ENCODE measurements at regions of chr17 and their contacts with region 1.

Region 1: DNA sequence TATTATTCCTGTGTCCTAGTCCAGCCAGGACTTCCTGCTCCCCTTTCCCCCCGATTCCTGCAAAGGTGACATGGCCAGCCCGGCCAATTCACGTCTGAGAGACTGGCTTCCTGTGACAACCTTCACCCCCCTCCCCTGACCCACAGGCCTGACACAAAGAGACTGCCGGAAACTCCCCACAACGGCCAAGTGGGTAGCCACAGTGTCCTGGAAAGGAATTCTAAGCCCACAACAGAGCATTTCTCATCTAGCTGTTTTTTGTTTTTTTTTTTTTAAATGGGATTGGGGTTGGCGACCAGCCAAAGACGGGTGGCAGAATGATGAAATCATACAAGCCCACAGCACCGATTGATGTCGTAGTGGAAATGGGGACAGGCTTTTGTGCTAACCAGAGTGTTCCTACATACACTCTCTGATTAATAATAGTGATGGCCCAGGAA is 2.8 kb upstream of the XAF1 start:
- DNase-seq: peak; percentile 87
- H3K4me3 ChIP-seq: peak overlapping the region in 1 of 3 experiments; percentile 13
- H3K27ac ChIP-seq: peak overlapping the region; percentile 96
- H3K4me1 ChIP-seq: peaks cover 36% of the 10 kb centered on the region
- H3K27me3 ChIP-seq: no peaks in the 10 kb centered on the region
- CTCF ChIP-seq: no peak
- POLR2A ChIP-seq: no peak

Region 2: DNA sequence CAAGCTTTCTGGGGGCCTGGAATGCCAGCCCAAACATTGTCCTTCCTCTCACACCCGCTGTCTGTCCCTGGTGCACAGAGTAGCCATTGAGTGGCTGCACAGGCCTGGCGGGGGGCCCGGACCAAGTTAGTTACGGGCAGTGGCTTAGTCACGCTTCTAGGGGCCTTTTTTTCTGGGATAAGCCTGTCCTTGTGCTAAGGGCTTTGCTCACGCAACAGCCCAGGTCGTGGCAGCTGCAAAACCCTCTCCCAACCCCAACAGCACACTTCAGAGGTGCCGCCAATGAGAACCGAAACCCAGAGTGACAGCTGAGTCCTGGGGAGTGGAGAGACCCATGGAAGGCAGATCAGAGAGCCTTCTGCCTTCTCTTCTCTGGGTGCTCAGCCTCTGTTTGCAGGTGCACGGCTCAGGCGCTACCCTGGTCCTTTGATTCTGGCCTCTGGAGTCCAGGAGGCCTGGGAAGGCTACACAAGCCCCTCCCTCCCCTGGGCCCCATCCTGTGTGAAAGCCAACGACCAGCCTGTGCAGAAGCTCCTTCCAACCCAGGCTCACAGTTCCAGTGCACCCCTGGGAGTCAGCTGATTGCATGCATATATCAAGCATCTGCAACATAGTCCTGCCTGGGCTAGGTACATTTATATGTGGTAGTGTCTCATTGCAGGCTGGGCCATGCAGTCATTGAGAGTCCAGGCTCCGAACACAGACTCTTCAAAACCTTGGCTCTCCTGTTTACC is 673.7 kb before region 1 on chr17:
- CTCF ChIA-PET with region 1: no interaction called
- POLR2A ChIA-PET with region 1: no interaction called
- dilution Hi-C with region 1: no loop called
- intact Hi-C with region 1: loop called (anchors 5 kb)
- DNase-seq: no peak
- H3K4me3 ChIP-seq: no peak overlapping the region
- H3K27ac ChIP-seq: no peak overlapping the region
- H3K4me1 ChIP-seq: no peaks in the 10 kb centered on the region
- H3K27me3 ChIP-seq: no peaks in the 10 kb centered on the region
- CTCF ChIP-seq: no peak
- POLR2A ChIP-seq: no peak

Region 3: DNA sequence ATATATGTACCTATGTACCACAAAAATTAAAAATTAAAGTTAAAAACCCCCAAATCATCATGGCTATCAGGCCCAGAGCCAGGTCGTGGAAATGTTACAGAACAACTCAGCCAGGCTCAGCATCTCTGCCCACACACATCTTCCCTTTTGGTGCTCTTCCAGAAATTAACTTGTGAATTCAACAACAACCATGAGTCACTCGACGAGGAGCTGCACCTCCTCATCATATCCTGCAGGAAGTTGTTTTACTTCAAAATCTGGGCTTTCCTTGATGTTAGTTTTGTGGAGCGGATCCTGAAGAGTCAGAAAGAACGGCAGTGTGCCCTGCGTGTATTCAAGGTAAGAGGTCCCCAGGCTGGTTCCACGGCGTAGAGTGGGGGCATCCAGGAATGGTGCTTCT is 33.6 kb after region 1 on chr17:
- CTCF ChIA-PET with region 1: interaction called, 4 read pairs
- POLR2A ChIA-PET with region 1: interaction called, 4 read pairs
- dilution Hi-C with region 1: no loop called
- intact Hi-C with region 1: loop called (anchors 1 kb)
- DNase-seq: peak; percentile 93
- H3K4me3 ChIP-seq: peak overlapping the region in 2 of 3 experiments; percentile 30 to 42
- H3K27ac ChIP-seq: peak overlapping the region; percentile 33
- H3K4me1 ChIP-seq: peaks cover 6% of the 10 kb centered on the region
- H3K27me3 ChIP-seq: peaks cover 0 to 15% of the 10 kb centered on the region in 2 experiments
- CTCF ChIP-seq: no peak
- POLR2A ChIP-seq: no peak

Region 4: GRCh38 chr17:6894206-6894528 is 141.1 kb after region 1 on chr17:
- CTCF ChIA-PET with region 1: interaction called, 15 read pairs
- POLR2A ChIA-PET with region 1: no interaction called
- dilution Hi-C with region 1: no loop called
- intact Hi-C with region 1: no loop called
- DNase-seq: peak; percentile 28
- H3K4me3 ChIP-seq: no peak overlapping the region
- H3K27ac ChIP-seq: no peak overlapping the region
- H3K4me1 ChIP-seq: no peaks in the 10 kb centered on the region
- H3K27me3 ChIP-seq: peaks cover 56 to 62% of the 10 kb centered on the region in 2 experiments
- CTCF ChIP-seq: peak; percentile 46 to 71
- POLR2A ChIP-seq: no peak

Region 5: GRCh38 chr17:7021993-7022778 is 269.2 kb after region 1 on chr17:
- CTCF ChIA-PET with region 1: no interaction called
- POLR2A ChIA-PET with region 1: no interaction called
- dilution Hi-C with region 1: no loop called
- intact Hi-C with region 1: loop called (anchors 2 kb)
- DNase-seq: peak; percentile 97
- H3K4me3 ChIP-seq: peak overlapping the region in 2 of 3 experiments; percentile 59 to 90
- H3K27ac ChIP-seq: peak overlapping the region; percentile 96
- H3K4me1 ChIP-seq: peaks cover 58% of the 10 kb centered on the region
- H3K27me3 ChIP-seq: no peaks in the 10 kb centered on the region
- CTCF ChIP-seq: peak; percentile 97 to 99
- POLR2A ChIP-seq: peak; percentile 66

Measured in endothelial cell of umbilical vein (primary cell).